ENCODE measurements at regions of chr17 and their contacts with region 1.

Region 1: DNA sequence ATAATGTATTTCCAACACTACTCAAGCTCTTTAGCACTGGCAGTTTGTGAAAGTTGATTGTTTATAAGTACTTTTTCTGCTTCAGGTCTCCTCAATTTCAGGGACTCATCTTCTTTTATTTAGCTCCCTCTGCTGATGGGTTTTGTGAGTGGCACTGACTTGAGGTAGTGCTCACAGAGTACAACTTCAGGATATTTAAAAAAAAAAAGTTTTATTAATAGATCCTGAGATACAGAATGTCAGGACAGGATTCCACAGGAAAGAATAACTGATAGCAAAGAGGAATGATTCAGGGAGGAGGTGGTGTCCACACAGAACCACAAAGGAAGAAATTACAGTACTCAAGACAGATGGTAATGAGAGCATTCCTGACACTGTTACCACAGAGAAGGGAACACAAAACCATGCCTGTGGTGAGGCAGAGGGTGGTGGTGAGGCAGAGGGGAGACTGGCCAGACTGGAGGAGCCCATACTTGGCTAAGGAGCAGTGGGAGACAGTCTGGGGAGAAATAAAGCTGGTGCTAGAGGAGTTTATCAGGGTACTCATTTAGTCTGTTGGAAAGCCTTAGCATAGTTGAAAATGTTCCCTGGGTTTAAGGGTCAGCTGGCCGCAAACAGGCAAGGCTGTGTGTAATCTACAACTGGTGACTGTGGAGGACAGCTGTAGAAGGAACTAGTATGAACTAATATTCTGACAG is 63.7 kb downstream of the SPAG9 start:
- DNase-seq: peak; percentile 81
- H3K4me3 ChIP-seq: no peak overlapping the region
- H3K27ac ChIP-seq: peak overlapping the region; percentile 30
- H3K4me1 ChIP-seq: no peaks in the 10 kb centered on the region
- H3K27me3 ChIP-seq: no peaks in the 10 kb centered on the region
- CTCF ChIP-seq: peak; percentile 80

Region 2: GRCh38 chr17:50853015-50853615 is 203.8 kb before region 1 on chr17:
- CTCF ChIA-PET with region 1: no interaction called
- POLR2A ChIA-PET with region 1: no interaction called
- intact Hi-C with region 1: loop called (anchors 10 kb)
- DNase-seq: no peak
- H3K4me3 ChIP-seq: no peak overlapping the region
- H3K27ac ChIP-seq: no peak overlapping the region
- H3K4me1 ChIP-seq: no peaks in the 10 kb centered on the region
- H3K27me3 ChIP-seq: no peaks in the 10 kb centered on the region
- CTCF ChIP-seq: no peak

Region 3: GRCh38 chr17:51000835-51001638 is 55.9 kb before region 1 on chr17:
- CTCF ChIA-PET with region 1: interaction called, 7 read pairs
- POLR2A ChIA-PET with region 1: no interaction called
- intact Hi-C with region 1: loop called (anchors 2 kb)
- DNase-seq: peak; percentile 77
- H3K4me3 ChIP-seq: no peak overlapping the region
- H3K27ac ChIP-seq: no peak overlapping the region
- H3K4me1 ChIP-seq: no peaks in the 10 kb centered on the region
- H3K27me3 ChIP-seq: no peaks in the 10 kb centered on the region
- CTCF ChIP-seq: peak; percentile 70

Region 4: DNA sequence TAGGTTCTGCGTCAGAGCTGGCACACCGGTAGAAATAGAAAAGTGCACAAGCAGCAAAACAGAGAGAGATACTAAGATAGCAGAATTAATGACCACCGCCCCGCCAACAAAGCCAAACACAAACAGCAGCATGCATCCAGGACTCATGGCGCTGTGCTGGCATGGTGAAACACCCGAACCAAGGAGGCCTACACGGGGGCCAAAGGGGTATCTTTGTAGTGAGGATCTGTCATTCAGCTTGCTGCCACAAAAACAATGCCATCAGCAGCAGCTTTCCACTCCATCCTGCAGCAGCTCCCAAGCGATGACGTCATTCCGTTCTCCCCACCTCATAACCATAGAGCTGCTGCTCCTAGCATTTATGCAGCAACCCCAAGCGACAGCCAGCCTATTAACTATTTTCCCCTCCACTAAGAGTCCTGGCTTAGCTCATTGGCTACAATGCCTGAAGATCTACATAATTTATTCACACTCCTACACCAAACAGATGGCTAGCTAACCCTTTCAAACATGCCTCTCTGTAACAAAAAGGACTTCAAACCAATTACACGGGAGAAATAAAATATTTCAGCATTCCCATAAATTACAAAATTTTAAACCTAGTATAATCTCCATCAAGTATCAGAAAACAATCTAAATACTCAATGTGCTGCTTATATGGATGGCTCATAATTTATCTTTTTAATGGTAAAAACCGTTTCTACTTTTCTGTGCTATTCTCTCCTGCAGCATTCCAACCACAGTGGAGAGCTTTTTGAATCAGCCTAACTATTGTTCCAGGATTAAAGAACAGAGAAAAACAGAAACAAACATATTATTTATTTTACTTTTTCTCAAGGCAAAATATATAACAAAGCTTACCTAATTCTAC is 10.2 kb before region 1 on chr17:
- CTCF ChIA-PET with region 1: interaction called, 10 read pairs
- POLR2A ChIA-PET with region 1: interaction called, 4 read pairs
- intact Hi-C with region 1: no loop called
- DNase-seq: peak; percentile 96
- H3K4me3 ChIP-seq: peak overlapping the region; percentile 27
- H3K27ac ChIP-seq: peak overlapping the region; percentile 41
- H3K4me1 ChIP-seq: peaks cover 27% of the 10 kb centered on the region
- H3K27me3 ChIP-seq: no peaks in the 10 kb centered on the region
- CTCF ChIP-seq: no peak